ENCODE measurements at regions of chr20 and their contacts with region 1.

Region 1: DNA sequence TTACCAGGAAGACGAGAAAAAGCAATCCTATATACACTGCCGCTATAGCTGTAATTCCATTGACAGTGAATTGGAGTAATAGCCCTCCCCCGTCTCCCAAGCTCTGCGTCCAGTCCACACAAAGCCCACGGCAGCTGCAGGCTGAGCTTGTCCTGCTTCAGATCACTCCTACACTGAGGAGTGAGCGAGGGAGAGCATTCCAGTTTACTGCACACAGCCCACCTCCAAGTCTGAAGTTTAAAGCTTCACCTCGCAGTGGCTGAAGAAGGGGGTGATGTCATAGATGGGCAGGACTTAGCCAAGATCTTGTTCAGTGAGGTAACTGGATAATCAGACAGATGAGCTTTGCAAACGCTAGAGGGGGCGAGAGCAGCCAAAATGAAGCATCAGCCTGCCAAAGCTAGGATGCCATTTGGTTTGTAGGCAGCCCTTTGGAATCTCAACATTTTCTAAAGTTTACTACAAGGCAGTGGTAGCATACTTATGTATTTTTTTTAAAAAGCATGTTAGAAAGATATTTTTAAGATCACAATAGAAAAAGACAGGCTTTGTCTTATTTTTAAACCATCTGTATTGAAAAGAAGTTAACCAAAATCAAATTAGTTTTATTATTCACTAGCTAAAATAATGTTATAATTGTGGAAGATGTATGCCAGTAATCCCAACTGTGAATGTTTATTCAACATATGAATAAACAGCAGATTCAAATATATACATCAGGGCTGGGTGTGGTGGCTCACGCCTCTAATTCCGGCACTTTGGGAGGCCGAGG is at the start of gene FLRT3:
- DNase-seq: peak; percentile 97
- H3K4me3 Mint-ChIP-seq: peak within 1 kb of the TSS; percentile 74
- H3K27ac Mint-ChIP-seq: peak within 1 kb of the TSS; percentile 84
- H3K4me1 Mint-ChIP-seq: no peaks in the 10 kb centered on the region
- H3K27me3 Mint-ChIP-seq: no peaks in the 10 kb centered on the region
- CTCF ChIP-seq: peak; percentile 89
- total RNA-seq, gene FLRT3: 13.3 and 15.7 TPM in 2 replicates

Region 2: DNA sequence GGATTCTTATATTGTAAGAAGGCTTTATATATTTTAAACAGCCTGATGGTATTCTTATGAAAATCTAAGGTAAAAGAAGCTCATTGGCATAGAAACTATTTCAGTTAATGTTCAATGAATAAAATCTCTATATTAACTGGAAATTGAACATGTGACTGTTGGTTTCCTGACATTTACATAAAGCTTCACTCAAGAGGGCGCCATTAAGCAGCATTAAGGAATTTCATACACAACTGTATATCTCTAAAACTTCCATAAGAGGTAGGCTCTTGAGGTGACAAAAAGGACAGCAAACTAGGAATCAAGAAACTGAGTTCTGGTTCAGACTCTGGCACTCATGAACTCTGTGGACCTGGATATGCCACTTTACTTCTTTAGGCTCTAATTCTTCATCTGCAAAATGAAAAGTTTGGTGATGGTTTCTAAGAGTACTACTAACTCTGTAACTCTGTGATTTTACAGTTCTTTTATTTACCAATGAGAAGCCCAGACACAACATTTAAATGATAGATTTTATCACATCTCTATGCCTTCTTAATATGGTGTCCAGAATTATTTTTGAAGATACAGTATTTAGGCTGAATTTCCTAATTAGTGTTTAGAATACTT is 147.7 kb before region 1 on chr20:
- CTCF ChIA-PET with region 1: interaction called, 21 read pairs
- POLR2A ChIA-PET with region 1: interaction called, 32 read pairs
- intact Hi-C with region 1: loop called (anchors 1 kb)
- DNase-seq: peak; percentile 61
- H3K4me3 Mint-ChIP-seq: no peak overlapping the region
- H3K27ac Mint-ChIP-seq: no peak overlapping the region
- H3K4me1 Mint-ChIP-seq: peaks cover 11% of the 10 kb centered on the region
- H3K27me3 Mint-ChIP-seq: no peaks in the 10 kb centered on the region
- CTCF ChIP-seq: peak; percentile 69

Region 3: DNA sequence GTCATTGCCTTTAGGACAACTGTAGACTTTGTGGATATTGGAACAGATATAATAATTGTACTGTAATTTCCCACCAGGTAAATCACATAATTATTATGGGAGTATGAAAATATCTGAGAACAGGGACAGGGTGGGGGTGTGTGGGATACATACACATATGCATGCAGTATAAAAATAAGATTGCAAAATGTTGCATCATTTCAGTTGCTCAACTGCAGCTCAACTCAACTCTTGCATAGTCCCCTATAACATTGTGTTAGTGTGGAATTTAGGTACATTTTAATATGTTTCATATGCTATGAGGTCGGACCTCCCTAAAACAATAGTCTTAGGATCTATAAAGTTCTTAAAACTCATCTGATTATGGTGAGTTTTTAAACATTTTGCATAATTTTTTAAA is 274.8 kb after region 1 on chr20:
- CTCF ChIA-PET with region 1: no interaction called
- POLR2A ChIA-PET with region 1: no interaction called
- intact Hi-C with region 1: loop called (anchors 1 kb)
- DNase-seq: peak; percentile 69
- H3K4me3 Mint-ChIP-seq: no peak overlapping the region
- H3K27ac Mint-ChIP-seq: no peak overlapping the region
- H3K4me1 Mint-ChIP-seq: peaks cover 11% of the 10 kb centered on the region
- H3K27me3 Mint-ChIP-seq: no peaks in the 10 kb centered on the region
- CTCF ChIP-seq: no peak

Region 4: GRCh38 chr20:14838663-14839628 is 501.4 kb after region 1 on chr20:
- CTCF ChIA-PET with region 1: interaction called, 16 read pairs
- POLR2A ChIA-PET with region 1: interaction called, 11 read pairs
- intact Hi-C with region 1: no loop called
- DNase-seq: peak; percentile 25
- H3K4me3 Mint-ChIP-seq: no peak overlapping the region
- H3K27ac Mint-ChIP-seq: no peak overlapping the region
- H3K4me1 Mint-ChIP-seq: peaks cover 11% of the 10 kb centered on the region
- H3K27me3 Mint-ChIP-seq: no peaks in the 10 kb centered on the region
- CTCF ChIP-seq: no peak

Region 5: GRCh38 chr20:14948423-14948822 is 610.8 kb after region 1 on chr20:
- CTCF ChIA-PET with region 1: interaction called, 14 read pairs
- POLR2A ChIA-PET with region 1: interaction called, 13 read pairs
- intact Hi-C with region 1: no loop called
- DNase-seq: peak; percentile 14
- H3K4me3 Mint-ChIP-seq: no peak overlapping the region
- H3K27ac Mint-ChIP-seq: no peak overlapping the region
- H3K4me1 Mint-ChIP-seq: peaks cover 14% of the 10 kb centered on the region
- H3K27me3 Mint-ChIP-seq: no peaks in the 10 kb centered on the region
- CTCF ChIP-seq: peak; percentile 24

Region 6: GRCh38 chr20:15061955-15062354 is 724.4 kb after region 1 on chr20:
- CTCF ChIA-PET with region 1: interaction called, 15 read pairs
- POLR2A ChIA-PET with region 1: interaction called, 93 read pairs
- intact Hi-C with region 1: no loop called
- DNase-seq: peak; percentile 76
- H3K4me3 Mint-ChIP-seq: peak overlapping the region; percentile 0
- H3K27ac Mint-ChIP-seq: peak overlapping the region; percentile 5
- H3K4me1 Mint-ChIP-seq: peaks cover 26% of the 10 kb centered on the region
- H3K27me3 Mint-ChIP-seq: no peaks in the 10 kb centered on the region
- CTCF ChIP-seq: no peak

Region 7: DNA sequence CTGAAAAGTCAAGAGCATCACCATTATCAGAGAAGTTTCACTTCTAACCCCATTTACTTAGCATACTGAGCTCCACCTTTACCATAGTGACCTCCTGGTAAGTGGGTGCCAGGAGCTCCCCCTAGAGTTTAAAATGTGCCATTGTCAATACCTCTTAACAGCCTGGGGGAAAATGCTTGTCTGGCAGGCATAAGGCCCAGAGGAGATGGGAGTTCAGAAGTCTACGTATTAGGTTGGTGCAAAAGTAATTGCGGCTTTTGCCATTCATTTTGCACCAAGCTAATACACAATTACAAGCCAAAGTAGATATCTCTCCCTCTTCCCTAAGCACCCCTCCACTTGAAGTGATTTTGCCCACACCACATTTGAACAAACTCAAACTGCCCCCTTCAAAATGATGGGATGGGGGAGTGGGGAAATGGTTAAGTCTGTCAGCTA is 1316.6 kb after region 1 on chr20:
- CTCF ChIA-PET with region 1: interaction called, 3 read pairs
- POLR2A ChIA-PET with region 1: no interaction called
- intact Hi-C with region 1: loop called (anchors 2 kb)
- DNase-seq: peak; percentile 64
- H3K4me3 Mint-ChIP-seq: no peak overlapping the region
- H3K27ac Mint-ChIP-seq: no peak overlapping the region
- H3K4me1 Mint-ChIP-seq: no peaks in the 10 kb centered on the region
- H3K27me3 Mint-ChIP-seq: no peaks in the 10 kb centered on the region
- CTCF ChIP-seq: peak; percentile 67